BJ (cell line): ENCODE measurements at regions of chr10 and their contacts with region 1.

Region 1: DNA sequence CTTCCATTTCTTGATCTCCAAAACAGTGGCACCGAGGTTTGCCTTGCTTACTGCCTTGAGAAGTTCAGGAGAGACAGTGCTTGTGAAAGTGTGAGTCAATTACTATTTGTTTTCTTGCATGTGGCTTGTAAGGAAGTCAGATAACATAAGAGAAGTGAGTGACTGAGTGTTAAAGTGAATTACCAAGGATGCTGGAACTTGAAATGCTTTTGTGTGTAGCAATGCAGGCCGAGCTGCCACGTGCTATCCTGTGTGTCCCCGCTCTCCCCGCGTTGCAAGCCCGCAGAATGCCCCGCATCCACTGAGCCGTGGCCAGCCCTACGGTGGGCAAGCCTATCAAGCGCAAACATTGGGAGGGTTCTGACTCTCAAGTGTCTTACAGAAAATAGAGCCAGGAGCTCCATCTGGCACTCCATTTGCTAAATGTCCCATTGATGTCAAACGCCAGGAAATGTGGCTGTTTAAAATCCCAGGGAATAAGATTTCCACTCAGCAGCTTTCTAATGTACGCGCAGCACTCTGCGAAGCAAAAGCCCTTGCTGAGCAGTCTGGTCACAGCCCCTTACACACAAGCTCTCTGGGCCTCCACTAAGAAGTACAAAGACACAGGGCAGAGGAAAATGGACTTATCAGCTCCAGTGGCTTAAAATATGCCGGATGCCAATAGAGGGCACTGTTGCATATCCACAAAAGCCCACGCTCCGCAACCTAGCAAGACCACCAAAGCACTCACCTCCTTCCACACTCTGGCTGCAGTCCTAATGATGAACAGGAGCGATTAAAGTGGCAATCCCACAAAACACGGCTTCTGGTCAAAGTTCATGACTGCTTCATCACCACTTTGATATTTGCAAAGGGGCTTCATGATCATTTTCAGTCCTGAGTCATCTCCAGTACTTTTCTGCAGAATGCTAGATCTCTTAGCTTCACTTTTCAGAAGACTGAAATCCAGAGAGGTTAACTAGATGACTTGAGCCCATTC is 158.0 kb upstream of the ITGB1 start:
- DNase-seq: no peak
- H3K4me3 ChIP-seq: no peak overlapping the region
- H3K27me3 ChIP-seq: no peaks in the 10 kb centered on the region
- CTCF ChIP-seq: peak; percentile 59

Region 2: GRCh38 chr10:33087152-33087551 is 28.9 kb before region 1 on chr10:
- CTCF ChIA-PET with region 1: no interaction called
- POLR2A ChIA-PET with region 1: no interaction called
- DNase-seq: no peak
- H3K4me3 ChIP-seq: no peak overlapping the region
- H3K27me3 ChIP-seq: peaks cover 2% of the 10 kb centered on the region; the same call in 1 of the 2 replicates
- CTCF ChIP-seq: no peak

Region 3: DNA sequence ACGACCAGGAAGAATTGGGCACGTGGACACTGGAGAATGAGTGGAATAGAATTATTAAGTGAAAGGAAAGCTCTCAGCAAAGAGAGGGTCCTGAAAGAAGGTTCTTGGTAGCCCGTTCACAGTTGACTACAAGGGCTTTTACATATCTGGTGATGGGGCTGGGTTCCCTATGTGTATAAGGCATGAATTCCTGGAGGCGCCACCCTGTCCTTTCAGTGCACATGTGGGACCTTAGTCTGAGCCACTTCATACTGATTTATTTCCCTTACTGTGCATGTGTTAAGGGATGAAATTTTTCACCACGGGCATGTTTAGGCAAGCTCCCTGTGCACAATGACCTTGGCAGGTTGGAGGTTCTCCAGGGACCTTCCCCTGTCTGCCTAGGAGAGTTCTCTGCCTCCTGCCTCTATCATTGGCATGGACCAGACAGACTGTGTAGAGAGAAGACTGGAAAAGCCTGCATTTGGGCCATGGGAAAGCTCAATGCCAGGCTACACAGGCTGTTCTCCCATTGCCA is 12.1 kb before region 1 on chr10:
- CTCF ChIA-PET with region 1: interaction called, 10 read pairs
- POLR2A ChIA-PET with region 1: no interaction called
- DNase-seq: no peak
- H3K4me3 ChIP-seq: no peak overlapping the region
- H3K27me3 ChIP-seq: peaks cover 2% of the 10 kb centered on the region
- CTCF ChIP-seq: no peak